Caco-2 (cell line): ENCODE measurements at regions of chr4 and their contacts with region 1.

Region 1: DNA sequence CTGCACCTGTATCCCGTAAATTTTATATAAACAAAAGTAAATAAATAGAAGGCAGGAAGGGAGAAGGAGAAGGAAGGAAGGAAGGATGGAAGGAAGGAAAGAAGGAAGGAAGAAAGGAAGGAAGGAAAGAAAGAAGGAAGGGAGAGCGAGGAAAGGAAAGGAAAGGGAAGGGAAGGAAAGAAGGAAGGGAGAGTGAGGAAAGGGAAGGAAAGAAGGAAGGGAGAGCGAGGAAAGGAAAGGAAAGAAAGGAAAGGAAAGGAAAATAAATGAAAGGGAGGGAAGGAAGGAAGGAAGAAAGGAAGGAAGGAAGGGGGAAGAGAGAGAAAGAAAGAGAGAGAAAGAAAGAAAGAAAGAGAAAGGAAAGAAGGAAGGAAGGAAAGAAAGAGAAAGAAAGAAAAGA is 43.0 kb upstream of the FRG1 start:
- DNase-seq: no peak
- H3K4me3 ChIP-seq: no peak overlapping the region
- H3K4me3 Mint-ChIP-seq: no peak overlapping the region
- H3K27ac Mint-ChIP-seq: no peak overlapping the region
- H3K4me1 ChIP-seq: no peaks in the 10 kb centered on the region
- H3K4me1 Mint-ChIP-seq: no peaks in the 10 kb centered on the region
- H3K27me3 ChIP-seq: no peaks in the 10 kb centered on the region
- H3K27me3 Mint-ChIP-seq: peaks cover 7% of the 10 kb centered on the region
- CTCF ChIP-seq: no peak

Region 2: GRCh38 chr4:189436207-189436606 is 461.5 kb before region 1 on chr4:
- CTCF ChIA-PET with region 1: no interaction called
- POLR2A ChIA-PET with region 1: no interaction called
- intact Hi-C with region 1: loop called (anchors 5 kb)
- DNase-seq: peak in 1 of 2 experiments; percentile 7
- H3K4me3 ChIP-seq: no peak overlapping the region
- H3K4me3 Mint-ChIP-seq: no peak overlapping the region
- H3K27ac Mint-ChIP-seq: no peak overlapping the region
- H3K4me1 ChIP-seq: no peaks in the 10 kb centered on the region
- H3K4me1 Mint-ChIP-seq: no peaks in the 10 kb centered on the region
- H3K27me3 ChIP-seq: no peaks in the 10 kb centered on the region
- H3K27me3 Mint-ChIP-seq: no peaks in the 10 kb centered on the region
- CTCF ChIP-seq: no peak

Region 3: GRCh38 chr4:189858435-189858834 is 39.2 kb before region 1 on chr4:
- CTCF ChIA-PET with region 1: no interaction called
- POLR2A ChIA-PET with region 1: no interaction called
- intact Hi-C with region 1: no loop called
- DNase-seq: no peak
- H3K4me3 ChIP-seq: no peak overlapping the region
- H3K4me3 Mint-ChIP-seq: no peak overlapping the region
- H3K27ac Mint-ChIP-seq: no peak overlapping the region
- H3K4me1 ChIP-seq: no peaks in the 10 kb centered on the region
- H3K4me1 Mint-ChIP-seq: no peaks in the 10 kb centered on the region
- H3K27me3 ChIP-seq: no peaks in the 10 kb centered on the region
- H3K27me3 Mint-ChIP-seq: no peaks in the 10 kb centered on the region
- CTCF ChIP-seq: no peak

Region 4: GRCh38 chr4:189940178-189941004 is 42.7 kb after region 1 on chr4 and contains the start of gene FRG1:
- CTCF ChIA-PET with region 1: no interaction called
- POLR2A ChIA-PET with region 1: no interaction called
- intact Hi-C with region 1: no loop called
- DNase-seq: peak; percentile 92 to 96
- H3K4me3 ChIP-seq: peak within 1 kb of the TSS; percentile 73
- H3K4me3 Mint-ChIP-seq: peak within 1 kb of the TSS; percentile 91
- H3K27ac Mint-ChIP-seq: peak within 1 kb of the TSS; percentile 82
- H3K4me1 ChIP-seq: 0 out of 2 replicates have a peak, but pooled peaks cover 3% of the 10 kb centered on the region
- H3K4me1 Mint-ChIP-seq: peaks cover 5% of the 10 kb centered on the region
- H3K27me3 ChIP-seq: no peaks in the 10 kb centered on the region
- H3K27me3 Mint-ChIP-seq: no peaks in the 10 kb centered on the region
- CTCF ChIP-seq: peak; percentile 88 to 95
- total RNA-seq, gene FRG1: 29.4 and 40.0 TPM in 2 replicates